ENCODE measurements at regions of chr17 and their contacts with region 1.

Region 1: GRCh38 chr17:34254651-34255380 is at the start of gene CCL2:
- DNase-seq: peak; percentile 82
- ATAC-seq: peak; percentile 71
- total RNA-seq, gene CCL2: 33.4 TPM

Region 2: GRCh38 chr17:33981711-33982601 is 272.9 kb before region 1 on chr17:
- intact Hi-C with region 1: loop called (anchors 5 kb)
- DNase-seq: no peak
- ATAC-seq: no peak

Region 3: DNA sequence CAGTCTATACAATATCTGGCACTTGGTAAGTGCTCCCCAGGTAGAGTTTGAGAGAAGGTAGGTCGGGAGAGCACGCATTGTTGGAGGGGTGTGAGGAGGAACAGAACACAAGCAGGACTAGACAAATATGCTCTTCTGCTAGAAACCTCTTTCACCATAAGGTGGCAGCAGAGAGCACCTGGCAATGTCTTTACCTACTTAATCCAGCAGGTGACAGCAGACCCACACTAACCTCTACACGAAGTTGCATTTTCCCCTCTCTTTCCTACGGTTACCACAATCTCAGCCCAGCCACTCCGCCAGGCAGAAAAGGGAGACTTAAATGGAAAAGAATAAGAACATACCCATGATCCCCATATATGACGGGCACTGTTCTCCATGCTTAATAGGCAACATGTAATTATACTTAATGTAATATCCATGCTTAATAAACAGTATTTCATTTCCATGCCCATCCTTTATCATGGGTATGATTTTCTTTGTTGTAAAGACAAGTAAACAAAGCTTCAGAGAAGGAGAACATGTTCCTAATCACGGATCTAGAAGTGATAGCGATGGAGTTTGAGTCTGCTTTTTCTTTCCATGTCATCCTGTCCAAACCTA is 54.8 kb before region 1 on chr17:
- intact Hi-C with region 1: loop called (anchors 5 kb)
- DNase-seq: peak; percentile 59
- ATAC-seq: peak; percentile 90

Region 4: GRCh38 chr17:34235389-34236028 is 19.3 kb before region 1 on chr17:
- intact Hi-C with region 1: loop called (anchors 1 kb)
- DNase-seq: peak; percentile 86
- ATAC-seq: peak; percentile 90

Region 5: GRCh38 chr17:34275881-34276280 is 21.1 kb after region 1 on chr17:
- intact Hi-C with region 1: no loop called
- DNase-seq: no peak
- ATAC-seq: no peak

Region 6: DNA sequence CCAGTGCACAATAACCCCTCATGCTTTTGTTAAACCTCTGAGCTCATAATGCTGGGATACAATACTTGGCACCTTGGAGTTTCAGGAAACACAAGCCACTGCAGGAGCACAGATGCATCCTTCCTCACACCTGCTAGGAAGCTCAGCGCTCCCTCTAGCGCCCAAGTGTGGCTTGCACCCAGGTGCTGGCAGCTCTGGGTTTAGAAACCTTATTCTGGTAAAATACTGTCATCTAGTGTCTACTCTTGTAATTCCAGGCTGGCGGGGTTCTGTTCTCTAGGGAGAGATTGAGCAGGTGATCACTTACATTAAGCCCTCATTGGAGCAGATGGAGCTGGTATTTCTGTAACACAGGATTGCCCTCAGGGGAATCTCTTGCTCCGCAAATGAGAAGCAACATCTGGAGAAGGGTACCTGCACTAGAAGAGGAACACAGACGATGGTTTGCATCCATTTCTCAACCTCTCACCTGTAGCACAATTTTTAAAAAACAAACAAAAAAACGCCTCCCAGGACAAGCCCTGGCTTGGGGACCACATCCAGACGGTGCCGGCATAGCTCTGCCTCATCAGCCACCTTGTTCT is 106.8 kb after region 1 on chr17:
- intact Hi-C with region 1: loop called (anchors 5 kb)
- DNase-seq: peak; percentile 94
- ATAC-seq: peak; percentile 90

Measured in Right ventricle myocardium inferior (tissue), 1 donor.